Body of pancreas (tissue), 4 donors: ENCODE measurements at regions of chr18 and their contacts with region 1.

Region 1: DNA sequence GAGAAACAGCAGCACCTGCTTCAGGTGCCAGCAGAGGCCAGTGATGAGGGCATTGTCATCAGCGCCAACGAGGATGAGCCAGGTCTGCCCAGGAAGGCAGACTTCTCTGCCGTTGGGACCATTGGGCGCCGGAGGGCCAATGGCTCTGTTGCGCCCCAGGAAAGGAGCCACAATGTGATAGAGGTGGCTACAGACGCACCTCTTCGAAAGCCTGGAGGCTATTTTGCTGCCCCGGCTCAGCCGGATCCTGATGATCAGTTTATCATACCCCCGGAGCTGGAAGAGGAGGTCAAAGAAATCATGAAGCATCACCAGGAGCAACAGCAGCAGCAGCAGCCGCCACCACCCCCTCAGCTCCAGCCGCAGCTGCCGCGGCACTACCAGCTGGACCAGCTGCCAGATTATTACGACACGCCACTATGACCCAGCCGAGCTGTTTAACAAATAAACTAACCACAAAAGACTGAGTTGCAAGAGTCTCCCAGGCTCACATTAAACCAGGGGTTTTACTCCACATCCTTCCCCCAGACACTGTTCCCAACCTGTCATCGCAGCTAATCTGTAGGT is 263.8 kb downstream of the PHLPP1 start:
- DNase-seq: peak in 2 of 4 donors; percentile 21 to 38
- ATAC-seq: no peak
- H3K4me3 ChIP-seq: no peak overlapping the region
- H3K27ac ChIP-seq: no peak overlapping the region
- H3K4me1 ChIP-seq: peaks cover 5% of the 10 kb centered on the region
- H3K27me3 ChIP-seq: no peaks in the 10 kb centered on the region
- CTCF ChIP-seq: no peak
- POLR2A ChIP-seq: no peak

Region 2: GRCh38 chr18:62445386-62445917 is 533.6 kb before region 1 on chr18:
- intact Hi-C with region 1: no loop called
- DNase-seq: no peak
- ATAC-seq: no peak
- H3K4me3 ChIP-seq: no peak overlapping the region
- H3K27ac ChIP-seq: no peak overlapping the region
- H3K4me1 ChIP-seq: peaks cover 5% of the 10 kb centered on the region
- H3K27me3 ChIP-seq: no peaks in the 10 kb centered on the region
- CTCF ChIP-seq: no peak
- POLR2A ChIP-seq: no peak

Region 3: DNA sequence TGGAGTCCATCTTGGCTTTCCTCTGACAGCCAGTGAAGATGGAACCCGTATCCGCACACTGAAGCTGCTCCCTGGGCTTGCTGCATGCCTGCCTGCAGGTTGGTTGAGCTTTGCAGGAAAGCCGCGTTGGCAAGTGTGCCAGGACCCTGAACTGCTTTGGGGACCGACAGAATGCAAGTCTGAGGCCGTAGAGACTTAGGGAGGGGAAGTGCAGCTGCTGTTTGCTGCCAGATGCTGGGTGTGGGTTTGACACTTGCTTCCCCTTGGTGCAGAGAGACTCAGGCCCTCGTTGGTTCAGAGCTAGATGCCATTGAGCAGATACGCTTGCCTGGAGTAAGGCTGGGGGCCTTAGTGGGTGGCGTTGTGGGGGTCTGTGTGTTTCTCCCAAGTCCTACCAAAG is 276.8 kb before region 1 on chr18:
- intact Hi-C with region 1: loop called (anchors 5 kb)
- DNase-seq: no peak
- ATAC-seq: no peak
- H3K4me3 ChIP-seq: no peak overlapping the region
- H3K27ac ChIP-seq: no peak overlapping the region
- H3K4me1 ChIP-seq: no peaks in the 10 kb centered on the region
- H3K27me3 ChIP-seq: no peaks in the 10 kb centered on the region
- CTCF ChIP-seq: no peak
- POLR2A ChIP-seq: no peak

Region 4: GRCh38 chr18:63234841-63235240 is 255.7 kb after region 1 on chr18:
- intact Hi-C with region 1: no loop called
- DNase-seq: no peak
- ATAC-seq: no peak
- H3K4me3 ChIP-seq: no peak overlapping the region
- H3K27ac ChIP-seq: no peak overlapping the region
- H3K4me1 ChIP-seq: peaks cover 26% of the 10 kb centered on the region
- H3K27me3 ChIP-seq: no peaks in the 10 kb centered on the region
- CTCF ChIP-seq: no peak
- POLR2A ChIP-seq: no peak